Activated B cell treated with CpG ODN at 0.5 μM for 24 hours (primary cell): ENCODE measurements at regions of chr11 and their contacts with region 1.

Region 1: GRCh38 chr11:3995949-3996554 is 98.5 kb upstream of the RRM1 start:
- DNase-seq: no peak
- ATAC-seq: peak; percentile 37
- H3K4me3 Mint-ChIP-seq: no peak overlapping the region
- H3K27ac Mint-ChIP-seq: no peak overlapping the region
- H3K4me1 Mint-ChIP-seq: peaks cover 29% of the 10 kb centered on the region
- H3K27me3 Mint-ChIP-seq: no peaks in the 10 kb centered on the region
- CTCF ChIP-seq: no peak

Region 2: DNA sequence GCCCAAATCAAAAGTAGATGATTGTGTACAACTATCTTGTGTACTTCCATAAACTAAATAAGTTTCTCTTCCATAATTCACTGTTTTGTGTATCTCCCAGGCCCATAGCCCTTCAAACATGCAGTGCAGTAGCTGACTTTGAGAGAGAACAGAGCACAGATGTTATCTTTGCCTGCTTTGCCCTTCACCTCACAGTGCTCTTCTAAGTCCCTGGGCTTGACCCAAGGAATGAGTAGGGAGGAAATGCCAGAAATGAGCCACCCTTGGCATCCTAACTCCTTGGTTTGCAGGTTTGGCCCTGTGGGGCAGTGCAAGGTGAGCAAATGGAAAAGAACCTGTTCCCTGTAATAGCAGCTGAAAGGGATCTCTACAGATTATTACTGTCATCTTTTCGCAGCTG is 61.4 kb before region 1 on chr11:
- CTCF ChIA-PET with region 1: no interaction called
- POLR2A ChIA-PET with region 1: no interaction called
- intact Hi-C with region 1: no loop called
- DNase-seq: no peak
- ATAC-seq: no peak
- H3K4me3 Mint-ChIP-seq: no peak overlapping the region
- H3K27ac Mint-ChIP-seq: no peak overlapping the region
- H3K4me1 Mint-ChIP-seq: peaks cover 60% of the 10 kb centered on the region
- H3K27me3 Mint-ChIP-seq: no peaks in the 10 kb centered on the region
- CTCF ChIP-seq: no peak

Region 3: GRCh38 chr11:3984896-3985295 is 11.2 kb before region 1 on chr11:
- CTCF ChIA-PET with region 1: interaction called, 3 read pairs
- POLR2A ChIA-PET with region 1: no interaction called
- intact Hi-C with region 1: loop called (anchors 2 kb)
- DNase-seq: no peak
- ATAC-seq: peak; percentile 73
- H3K4me3 Mint-ChIP-seq: no peak overlapping the region
- H3K27ac Mint-ChIP-seq: no peak overlapping the region
- H3K4me1 Mint-ChIP-seq: peaks cover 38% of the 10 kb centered on the region
- H3K27me3 Mint-ChIP-seq: no peaks in the 10 kb centered on the region
- CTCF ChIP-seq: no peak